HEK293 (cell line): ENCODE measurements at regions of chr2 and their contacts with region 1.

Region 1: GRCh38 chr2:127591221-127591923 is 54.6 kb upstream of the GPR17 start:
- H3K4me3 ChIP-seq: no peak overlapping the region
- H3K27ac ChIP-seq: no peak overlapping the region
- H3K4me1 ChIP-seq: no peaks in the 10 kb centered on the region
- CTCF ChIP-seq: peak; percentile 89

Region 2: DNA sequence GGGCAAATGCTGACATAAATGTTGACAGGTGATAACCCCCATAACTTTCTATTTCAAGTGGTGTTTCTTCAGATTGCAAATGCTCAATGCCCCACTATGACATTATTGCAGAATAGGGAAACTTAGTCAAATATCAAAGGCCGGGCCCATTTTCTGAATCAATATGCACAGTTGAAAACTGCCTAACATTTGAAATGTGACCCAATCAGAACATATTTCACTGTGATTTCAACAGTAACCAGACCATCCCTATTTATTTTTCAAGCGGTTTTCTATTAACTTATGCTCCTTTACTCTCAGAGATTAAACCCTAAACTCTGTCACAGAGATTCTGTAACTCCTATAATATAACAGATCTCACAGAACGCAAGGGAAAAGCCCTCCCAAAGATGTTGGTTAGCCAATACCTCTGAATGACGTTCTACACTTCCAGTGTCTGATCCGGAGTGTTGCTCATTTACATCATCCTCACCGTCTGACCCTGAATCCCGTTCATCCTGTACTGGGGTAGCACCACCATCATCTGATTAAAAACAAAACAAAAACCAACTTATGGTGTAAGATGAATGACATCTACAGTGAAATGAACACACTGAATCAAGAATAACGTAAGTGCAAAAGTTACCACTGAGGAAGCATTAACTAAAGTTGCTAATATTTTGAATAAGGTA is 68.0 kb before region 1 on chr2:
- CTCF ChIA-PET with region 1: no interaction called
- POLR2A ChIA-PET with region 1: no interaction called
- H3K4me3 ChIP-seq: no peak overlapping the region
- H3K27ac ChIP-seq: no peak overlapping the region
- H3K4me1 ChIP-seq: peaks cover 4% of the 10 kb centered on the region; the same call in 1 of the 2 replicates
- CTCF ChIP-seq: no peak

Region 3: DNA sequence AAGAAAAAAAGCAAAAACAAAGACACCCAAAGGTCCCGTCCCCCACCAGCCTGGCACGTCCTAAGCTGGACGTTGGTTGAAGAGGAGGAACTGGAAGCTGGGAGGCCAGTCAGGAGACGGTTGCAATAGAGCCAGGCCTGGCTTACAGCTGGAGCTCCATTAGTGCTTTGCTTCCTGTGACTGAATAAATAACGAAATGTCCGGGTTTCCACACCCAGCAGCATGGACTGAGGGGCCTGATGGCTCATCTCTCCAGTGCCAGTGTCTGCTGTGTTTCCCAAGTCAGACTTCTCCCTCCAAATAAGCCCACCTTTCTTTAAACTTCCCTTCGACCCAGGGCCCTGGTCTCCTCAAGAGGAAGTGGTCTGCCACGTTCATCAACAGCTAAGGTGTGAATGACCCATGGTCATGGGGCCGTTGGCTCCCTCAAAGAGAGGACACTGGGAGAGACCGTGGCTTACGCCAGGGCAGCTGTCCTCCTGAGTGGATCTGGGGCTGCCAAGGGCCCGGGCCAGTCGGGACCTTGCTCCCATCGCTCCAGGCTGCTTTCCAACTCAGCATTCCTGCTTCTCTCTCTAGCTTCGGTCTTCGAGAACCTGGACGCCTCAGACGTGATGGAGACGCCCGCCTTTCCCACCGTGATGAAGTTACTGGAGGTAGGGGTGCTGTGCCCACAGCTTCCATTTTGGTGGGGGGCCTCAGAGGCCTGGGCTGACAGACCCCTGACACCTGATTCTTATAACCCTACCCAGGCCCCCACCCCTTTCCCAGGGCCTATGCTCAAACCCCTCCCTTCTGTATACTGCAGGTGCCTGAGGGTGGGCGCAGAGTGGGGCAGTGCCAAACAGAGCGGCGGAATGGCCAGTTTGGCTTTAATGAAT is 11.0 kb before region 1 on chr2:
- CTCF ChIA-PET with region 1: interaction called, 10 read pairs
- POLR2A ChIA-PET with region 1: no interaction called
- H3K4me3 ChIP-seq: no peak overlapping the region
- H3K27ac ChIP-seq: no peak overlapping the region
- H3K4me1 ChIP-seq: no peaks in the 10 kb centered on the region
- CTCF ChIP-seq: no peak

Region 4: DNA sequence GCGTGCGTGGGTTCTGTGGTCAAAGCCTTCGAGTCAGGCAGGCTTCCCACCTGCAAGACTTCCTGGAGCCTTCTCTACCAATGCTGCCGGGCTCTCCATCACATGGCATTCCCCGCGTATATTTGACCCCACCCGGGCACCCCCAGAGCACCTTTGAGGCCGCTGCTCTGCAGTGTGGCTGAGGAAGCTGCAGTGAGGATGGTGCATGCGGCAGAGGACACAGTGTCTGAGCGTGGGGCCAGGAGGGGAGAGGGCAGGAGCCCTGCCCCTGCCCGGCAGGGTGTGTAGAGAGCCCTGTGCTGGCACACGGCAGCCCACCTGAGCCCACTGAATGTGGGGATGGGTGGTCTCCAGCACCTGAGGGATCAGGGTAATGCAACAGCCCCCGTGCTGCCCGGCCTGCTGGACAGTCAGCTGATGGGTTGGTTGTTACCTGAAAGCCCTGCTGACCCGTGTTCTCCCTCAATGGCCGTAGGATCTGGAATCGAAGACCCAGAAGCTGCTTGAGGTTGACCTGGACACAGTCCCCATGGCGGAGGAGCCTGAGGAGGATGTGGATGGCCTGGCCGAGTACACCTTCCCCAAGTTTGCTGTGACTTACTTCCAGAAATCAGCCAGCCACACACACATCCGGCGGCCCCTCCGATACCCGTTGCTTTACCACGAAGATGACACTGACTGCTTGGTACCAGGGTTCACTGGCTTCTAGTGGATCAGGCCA is 17.8 kb after region 1 on chr2:
- CTCF ChIA-PET with region 1: interaction called, 19 read pairs
- POLR2A ChIA-PET with region 1: no interaction called
- H3K4me3 ChIP-seq: no peak overlapping the region
- H3K27ac ChIP-seq: no peak overlapping the region
- H3K4me1 ChIP-seq: no peaks in the 10 kb centered on the region
- CTCF ChIP-seq: no peak

Region 5: GRCh38 chr2:127637725-127638252 is 46.4 kb after region 1 on chr2:
- CTCF ChIA-PET with region 1: interaction called, 31 read pairs
- POLR2A ChIA-PET with region 1: no interaction called
- H3K4me3 ChIP-seq: no peak overlapping the region
- H3K27ac ChIP-seq: no peak overlapping the region
- H3K4me1 ChIP-seq: peaks cover 2% of the 10 kb centered on the region; the same call in 1 of the 2 replicates
- CTCF ChIP-seq: no peak

Region 6: DNA sequence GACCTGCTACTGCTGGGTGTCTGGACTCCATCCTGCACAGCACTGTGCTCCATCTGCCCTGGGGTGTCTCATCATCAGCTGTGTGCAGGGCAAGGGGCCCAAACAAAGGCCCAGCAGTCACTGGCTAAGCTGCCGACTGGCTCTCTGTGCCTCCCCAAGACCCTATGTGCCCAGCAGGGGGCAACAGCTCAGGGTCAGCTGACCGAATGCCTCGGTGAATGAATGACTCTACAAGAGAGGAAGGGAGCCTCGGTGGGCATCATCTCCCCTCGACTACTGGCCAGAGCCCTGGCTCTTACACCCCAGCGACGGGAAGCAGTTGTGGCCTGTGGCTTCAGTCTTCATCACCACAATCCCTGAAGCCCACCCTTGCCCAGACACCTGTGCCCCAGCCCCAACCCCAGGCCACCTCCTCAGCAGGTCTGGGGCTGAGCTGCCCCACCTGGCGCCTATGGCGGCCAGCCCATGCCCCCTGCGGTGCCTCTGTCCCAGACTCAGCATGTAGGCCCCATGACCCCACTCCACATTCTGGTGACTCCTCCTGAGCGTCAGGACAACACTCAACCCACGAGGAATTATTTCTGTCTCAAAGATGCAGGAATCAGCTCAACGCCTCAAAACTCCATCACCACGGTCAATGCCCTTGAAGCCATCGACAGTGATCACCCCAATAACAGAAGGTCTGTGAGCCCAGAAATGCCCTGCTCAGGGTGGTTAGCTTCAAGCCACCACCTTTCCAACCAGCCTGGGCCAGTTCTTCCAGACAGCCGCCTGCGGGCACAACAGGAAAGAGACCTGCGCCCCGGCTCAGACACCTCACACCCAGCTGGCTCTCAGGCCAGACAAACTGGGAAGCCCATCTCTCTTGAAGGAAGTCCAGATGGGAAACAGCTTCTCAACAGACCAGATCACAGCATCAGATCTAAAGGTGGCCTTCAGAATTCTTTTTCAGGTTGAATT is 53.0 kb after region 1 on chr2:
- CTCF ChIA-PET with region 1: interaction called, 54 read pairs
- POLR2A ChIA-PET with region 1: no interaction called
- H3K4me3 ChIP-seq: no peak overlapping the region
- H3K27ac ChIP-seq: no peak overlapping the region
- H3K4me1 ChIP-seq: no peaks in the 10 kb centered on the region
- CTCF ChIP-seq: no peak

Region 7: GRCh38 chr2:127649684-127650040 is 58.3 kb after region 1 on chr2:
- CTCF ChIA-PET with region 1: interaction called, 54 read pairs
- POLR2A ChIA-PET with region 1: interaction called, 4 read pairs
- H3K4me3 ChIP-seq: no peak overlapping the region
- H3K27ac ChIP-seq: no peak overlapping the region
- H3K4me1 ChIP-seq: no peaks in the 10 kb centered on the region
- CTCF ChIP-seq: peak; percentile 67; the same call in 1 of the 2 replicates

Region 8: DNA sequence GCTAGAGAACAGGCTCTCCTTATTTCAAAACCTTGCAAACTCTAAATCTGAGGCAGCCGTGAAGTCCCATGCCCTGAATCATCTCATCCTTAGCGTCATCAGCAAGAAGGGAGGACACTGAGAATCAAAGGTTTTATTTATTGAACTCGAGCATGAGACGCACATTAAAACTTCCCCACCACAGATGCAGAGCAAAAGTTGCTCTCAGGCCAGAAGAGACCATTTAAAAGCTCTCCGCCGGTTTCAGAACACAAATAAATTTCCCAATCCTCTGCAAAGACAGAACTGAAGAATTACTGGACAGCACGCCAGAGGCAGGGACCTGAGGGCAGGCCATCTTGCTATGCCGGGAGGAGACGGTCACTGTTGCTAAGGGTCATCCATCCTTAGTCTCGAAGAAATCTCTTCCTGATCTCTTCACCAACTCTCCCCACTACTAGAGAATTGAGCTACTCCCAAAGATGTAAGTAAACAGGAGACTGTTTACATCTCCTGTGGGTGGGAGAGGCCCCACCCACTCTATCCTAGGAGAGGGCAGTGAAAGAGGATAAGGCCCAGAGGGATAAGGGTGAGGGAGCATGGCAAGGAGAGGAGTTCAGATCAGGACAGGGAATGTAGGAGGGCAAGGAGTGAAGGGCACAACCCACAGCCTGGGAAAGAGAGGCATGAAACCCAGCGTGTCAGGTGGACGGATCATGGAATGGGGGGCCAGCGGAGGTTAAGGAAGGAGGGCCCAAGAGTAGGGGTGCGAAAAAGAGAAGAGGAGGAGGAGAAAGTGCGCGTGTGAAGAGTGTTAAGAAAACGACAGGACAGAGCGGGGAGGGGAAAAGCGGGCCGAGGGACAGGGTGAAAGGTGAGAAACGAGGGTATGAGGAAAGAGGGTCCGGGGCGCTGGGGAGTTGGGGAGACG is 293.3 kb after region 1 on chr2:
- CTCF ChIA-PET with region 1: no interaction called
- POLR2A ChIA-PET with region 1: no interaction called
- H3K4me3 ChIP-seq: peak overlapping the region; percentile 54
- H3K27ac ChIP-seq: peak overlapping the region; percentile 68
- H3K4me1 ChIP-seq: peaks cover 8% of the 10 kb centered on the region; the same call in 1 of the 2 replicates
- CTCF ChIP-seq: no peak